ENCODE measurements at regions of chr18 and their contacts with region 1.

Region 1: GRCh38 chr18:45920367-45920766 is 46.8 kb downstream of the EPG5 start:
- DNase-seq: peak; percentile 89
- H3K4me3 ChIP-seq: no peak overlapping the region
- H3K27ac ChIP-seq: peak overlapping the region; percentile 31
- H3K4me1 ChIP-seq: peaks cover 14% of the 10 kb centered on the region
- H3K27me3 ChIP-seq: no peaks in the 10 kb centered on the region
- CTCF ChIP-seq: no peak

Region 2: GRCh38 chr18:45879681-45880655 is 40.4 kb before region 1 on chr18:
- CTCF ChIA-PET with region 1: no interaction called
- dilution Hi-C with region 1: no loop called
- in situ Hi-C with region 1: no loop called
- intact Hi-C with region 1: loop called (anchors 5 kb)
- DNase-seq: peak; percentile 50
- H3K4me3 ChIP-seq: no peak overlapping the region
- H3K27ac ChIP-seq: no peak overlapping the region
- H3K4me1 ChIP-seq: no peaks in the 10 kb centered on the region
- H3K27me3 ChIP-seq: no peaks in the 10 kb centered on the region
- CTCF ChIP-seq: peak; percentile 99

Region 3: GRCh38 chr18:45997700-45998151 is 77.4 kb after region 1 on chr18:
- CTCF ChIA-PET with region 1: no interaction called
- dilution Hi-C with region 1: loop called (anchors 5 kb)
- in situ Hi-C with region 1: no loop called
- intact Hi-C with region 1: no loop called
- DNase-seq: no peak
- H3K4me3 ChIP-seq: no peak overlapping the region
- H3K27ac ChIP-seq: no peak overlapping the region
- H3K4me1 ChIP-seq: peaks cover 8% of the 10 kb centered on the region
- H3K27me3 ChIP-seq: no peaks in the 10 kb centered on the region
- CTCF ChIP-seq: no peak

Region 4: GRCh38 chr18:46073474-46074331 is 153.3 kb after region 1 on chr18:
- CTCF ChIA-PET with region 1: no interaction called
- dilution Hi-C with region 1: no loop called
- in situ Hi-C with region 1: no loop called
- intact Hi-C with region 1: loop called (anchors 5 kb)
- DNase-seq: peak; percentile 63
- H3K4me3 ChIP-seq: no peak overlapping the region
- H3K27ac ChIP-seq: no peak overlapping the region
- H3K4me1 ChIP-seq: peaks cover 17% of the 10 kb centered on the region
- H3K27me3 ChIP-seq: no peaks in the 10 kb centered on the region
- CTCF ChIP-seq: peak; percentile 54 to 66

Measured in mammary epithelial cell (primary cell).